Dorsolateral prefrontal cortex (tissue), 120 donors: ENCODE measurements at regions of chr2 and their contacts with region 1.

Region 1: DNA sequence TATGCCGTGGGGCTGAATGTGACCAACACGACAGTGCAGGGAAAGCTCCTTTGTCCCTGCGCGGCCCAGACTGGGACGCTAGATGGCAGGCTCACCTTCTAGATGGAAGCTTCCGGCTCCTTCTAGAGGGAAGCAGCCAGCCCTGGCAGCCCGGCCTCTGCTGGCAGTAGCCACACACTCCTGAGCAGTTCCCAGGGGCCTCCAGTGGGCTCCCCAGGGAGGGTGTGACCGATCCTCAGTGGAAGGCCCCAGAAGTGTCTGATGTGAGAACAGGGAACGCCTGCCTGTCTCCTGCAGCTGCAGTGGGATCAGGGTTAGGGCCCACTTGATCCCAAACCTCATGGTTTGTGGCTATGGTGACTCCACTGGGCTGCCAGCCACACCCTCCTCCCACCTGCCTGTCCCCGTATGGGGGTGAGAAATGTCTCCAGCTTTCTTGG is 48.5 kb upstream of the LRPPRC start:
- DNase-seq: peak; percentile 73 to 92 (median 86)
- H3K4me3 ChIP-seq: peak overlapping the region in 4 of 59 donors; percentile 1 to 14 (median 9)
- H3K27ac ChIP-seq: peak overlapping the region in 27 of 59 donors; percentile 6 to 83 (median 61)
- H3K27me3 ChIP-seq: no peaks in the 10 kb centered on the region
- CTCF ChIP-seq: peak; percentile 47 to 98 (median 92)

Region 2: GRCh38 chr2:43759195-43759594 is 285.1 kb before region 1 on chr2:
- intact Hi-C with region 1: no loop called
- DNase-seq: no peak
- H3K4me3 ChIP-seq: no peak overlapping the region
- H3K27ac ChIP-seq: peak overlapping the region in 1 of 59 donors; percentile 1
- H3K27me3 ChIP-seq: no peaks in the 10 kb centered on the region
- CTCF ChIP-seq: no peak

Region 3: DNA sequence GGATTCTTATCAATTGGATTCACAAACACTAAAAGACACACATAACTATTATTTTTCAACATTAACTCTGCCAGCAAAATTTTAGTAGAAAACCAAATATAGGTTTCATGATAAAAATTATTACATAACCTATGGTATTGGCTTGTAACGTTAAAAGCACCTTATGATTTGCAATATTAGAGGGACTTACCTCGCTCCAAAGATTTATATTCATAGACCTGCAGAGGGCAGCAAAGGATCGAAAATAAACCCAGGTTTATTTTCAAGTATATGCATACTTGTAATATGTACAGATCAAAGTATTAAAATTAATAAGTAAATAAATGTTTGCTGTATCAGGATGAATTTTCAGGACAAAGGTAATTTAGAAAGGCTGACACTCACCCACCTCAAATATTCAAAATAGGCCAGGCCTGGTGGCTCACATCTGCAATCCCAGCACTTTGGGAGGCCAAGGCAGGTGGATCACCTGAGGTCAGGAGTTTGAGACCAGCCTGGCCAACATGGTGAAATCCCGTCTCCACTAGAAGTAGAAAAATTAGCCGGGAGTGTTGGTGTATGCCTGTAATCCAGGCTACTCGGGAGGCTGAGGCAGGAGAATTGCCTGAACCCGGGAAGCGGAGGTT is 93.8 kb before region 1 on chr2:
- intact Hi-C with region 1: no loop called
- DNase-seq: peak in 1 of 10 donors; percentile 14
- H3K4me3 ChIP-seq: no peak overlapping the region
- H3K27ac ChIP-seq: peak overlapping the region in 1 of 59 donors; percentile 16
- H3K27me3 ChIP-seq: no peaks in the 10 kb centered on the region
- CTCF ChIP-seq: peak; percentile 26 to 77 (median 58)

Region 4: GRCh38 chr2:43995733-43996533 is 48.4 kb before region 1 on chr2 and contains the start of gene LRPPRC:
- intact Hi-C with region 1: loop called in 1 of 2 experiments (anchors 5 kb)
- DNase-seq: peak; percentile 88 to 97 (median 95)
- H3K4me3 ChIP-seq: peak within 1 kb of the TSS; percentile 56 to 100 (median 99)
- H3K27ac ChIP-seq: peak within 1 kb of the TSS; percentile 59 to 96 (median 90)
- H3K27me3 ChIP-seq: no peaks in the 10 kb centered on the region
- CTCF ChIP-seq: peak in 15 of 56 donors; percentile 7 to 28 (median 12)
- total RNA-seq, gene LRPPRC: 53.4 to 119 (median 92.9) TPM

Region 5: DNA sequence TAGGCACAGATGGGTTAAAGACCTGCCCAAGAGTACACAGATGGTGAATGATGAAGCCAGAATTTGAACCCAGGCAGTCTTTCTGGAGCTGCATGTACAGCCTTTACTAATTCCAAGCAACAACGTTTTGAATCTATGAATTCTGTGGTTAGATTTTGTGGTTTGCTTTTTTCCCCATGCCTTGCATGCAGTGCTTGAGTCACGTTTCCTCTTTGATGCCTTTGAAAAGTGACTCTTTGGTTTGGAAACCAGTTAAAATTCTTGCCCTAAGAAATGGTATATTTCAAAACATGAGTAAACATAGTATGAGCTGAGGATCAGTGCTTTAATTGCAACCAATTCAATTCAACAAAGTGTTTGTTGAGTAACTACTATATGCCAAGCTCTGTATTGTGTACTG is 76.1 kb after region 1 on chr2:
- intact Hi-C with region 1: no loop called
- DNase-seq: no peak
- H3K4me3 ChIP-seq: no peak overlapping the region
- H3K27ac ChIP-seq: no peak overlapping the region
- H3K27me3 ChIP-seq: no peaks in the 10 kb centered on the region
- CTCF ChIP-seq: no peak

Region 6: GRCh38 chr2:44167940-44168680 is 123.8 kb after region 1 on chr2:
- intact Hi-C with region 1: loop called in 1 of 2 experiments (anchors 5 kb)
- DNase-seq: peak; percentile 92 to 100 (median 100)
- H3K4me3 ChIP-seq: peak overlapping the region; percentile 48 to 100 (median 73)
- H3K27ac ChIP-seq: peak overlapping the region; percentile 86 to 100 (median 99)
- H3K27me3 ChIP-seq: no peaks in the 10 kb centered on the region
- CTCF ChIP-seq: peak in 12 of 56 donors; percentile 4 to 37 (median 14)

Region 7: DNA sequence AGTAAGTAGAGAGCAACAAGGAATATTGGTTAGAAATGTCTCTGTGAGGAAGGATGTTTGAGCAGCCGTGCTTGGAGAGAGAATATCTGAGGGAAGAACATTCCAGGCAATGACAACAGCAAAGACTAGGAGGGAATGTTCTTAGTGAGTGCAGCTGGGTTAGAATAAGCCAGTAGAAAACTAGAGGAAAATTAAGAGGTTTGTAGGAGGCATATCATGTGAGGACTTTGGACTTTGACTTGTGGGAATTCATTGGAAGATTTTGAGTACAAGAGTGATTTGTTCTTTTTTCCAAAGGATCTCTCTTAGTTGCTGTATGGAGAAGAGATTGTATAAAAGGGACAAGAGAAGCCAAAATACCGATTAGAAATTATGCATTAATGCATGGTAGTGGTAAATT is 171.5 kb after region 1 on chr2:
- intact Hi-C with region 1: no loop called
- DNase-seq: no peak
- H3K4me3 ChIP-seq: no peak overlapping the region
- H3K27ac ChIP-seq: peak overlapping the region in 2 of 59 donors; percentile 16 to 21
- H3K27me3 ChIP-seq: no peaks in the 10 kb centered on the region
- CTCF ChIP-seq: no peak

Region 8: DNA sequence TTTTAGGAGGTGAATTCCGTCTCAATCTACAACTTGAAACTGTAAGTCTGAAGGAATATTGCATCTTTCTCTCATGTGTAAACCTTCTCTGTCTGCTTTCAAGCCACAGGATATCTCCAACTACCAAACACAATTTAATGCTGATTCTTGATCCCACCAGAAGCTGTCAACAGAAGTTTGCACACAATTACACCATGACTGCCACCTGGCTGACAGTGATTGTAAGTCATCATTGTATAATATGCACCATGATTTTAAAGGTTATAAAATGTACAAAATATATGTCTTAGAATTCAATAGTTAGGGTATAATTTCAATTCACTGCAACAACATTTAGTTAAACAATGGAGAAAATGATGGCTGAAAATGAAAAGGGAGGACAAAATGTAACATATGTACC is 298.6 kb after region 1 on chr2:
- intact Hi-C with region 1: loop called in 1 of 2 experiments (anchors 10 kb)
- DNase-seq: no peak
- H3K4me3 ChIP-seq: no peak overlapping the region
- H3K27ac ChIP-seq: peak overlapping the region in 6 of 59 donors; percentile 5 to 39 (median 22)
- H3K27me3 ChIP-seq: no peaks in the 10 kb centered on the region
- CTCF ChIP-seq: peak in 51 of 56 donors; percentile 9 to 69 (median 46)